ENCODE measurements at regions of chr1 and their contacts with region 1.

Region 1: GRCh38 chr1:11337580-11338073 is 64.6 kb downstream of the UBIAD1 start:
- DNase-seq: peak; percentile 65 to 76
- ATAC-seq: peak in 2 of 4 donors; percentile 47 to 58
- H3K4me3 ChIP-seq: no peak overlapping the region
- H3K27ac ChIP-seq: no peak overlapping the region
- H3K4me1 ChIP-seq: peaks cover 20% of the 10 kb centered on the region
- H3K27me3 ChIP-seq: no peaks in the 10 kb centered on the region
- CTCF ChIP-seq: peak; percentile 79

Region 2: GRCh38 chr1:10950316-10951172 is 387.1 kb before region 1 on chr1:
- intact Hi-C with region 1: no loop called
- DNase-seq: no peak
- ATAC-seq: peak in 1 of 4 donors; percentile 60
- H3K4me3 ChIP-seq: no peak overlapping the region
- H3K27ac ChIP-seq: peak overlapping the region; percentile 30
- H3K4me1 ChIP-seq: peaks cover 8% of the 10 kb centered on the region
- H3K27me3 ChIP-seq: no peaks in the 10 kb centered on the region
- CTCF ChIP-seq: no peak

Region 3: DNA sequence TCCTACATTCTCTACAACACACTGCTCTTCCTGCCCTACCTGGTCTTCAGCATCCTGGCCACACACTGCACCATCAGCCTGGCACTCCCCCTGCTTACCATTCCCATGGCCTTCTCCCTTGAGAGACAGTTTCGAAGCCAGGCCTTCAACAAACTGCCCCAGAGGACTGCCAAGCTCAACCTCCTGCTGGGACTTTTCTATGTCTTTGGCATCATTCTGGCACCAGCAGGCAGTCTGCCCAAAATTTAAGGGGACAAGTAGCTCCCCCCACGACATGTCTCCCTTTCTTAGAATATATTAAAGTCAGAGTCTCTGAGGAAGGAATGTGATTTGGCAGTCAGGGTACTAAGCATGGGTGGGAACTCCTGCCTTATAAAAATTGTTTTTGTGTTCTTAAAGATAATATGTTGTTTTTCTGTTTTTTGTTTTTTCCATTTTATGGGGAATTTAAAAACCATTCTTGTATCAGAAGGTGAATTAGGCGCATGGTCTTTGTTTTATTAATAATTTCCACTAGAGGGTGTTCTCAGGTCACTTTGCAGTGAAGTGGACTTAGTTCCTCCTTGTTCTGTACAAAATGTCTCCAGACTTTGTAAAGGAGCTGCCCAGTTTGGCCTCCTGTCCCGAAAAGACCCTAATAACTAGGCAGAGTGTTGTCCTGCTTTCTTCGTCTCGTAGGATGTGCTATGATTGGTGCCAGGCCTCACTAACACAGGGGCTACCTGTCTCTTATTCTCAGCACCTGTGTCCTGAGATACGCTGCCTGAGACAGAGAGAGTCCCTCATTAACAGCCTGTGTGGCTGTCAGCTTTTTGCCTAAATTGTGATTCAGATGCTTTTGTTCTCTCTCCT is 51.5 kb before region 1 on chr1:
- intact Hi-C with region 1: loop called in 1 of 2 experiments (anchors 5 kb)
- DNase-seq: no peak
- ATAC-seq: peak in 1 of 4 donors; percentile 30
- H3K4me3 ChIP-seq: no peak overlapping the region
- H3K27ac ChIP-seq: no peak overlapping the region
- H3K4me1 ChIP-seq: peaks cover 32% of the 10 kb centered on the region
- H3K27me3 ChIP-seq: no peaks in the 10 kb centered on the region
- CTCF ChIP-seq: peak; percentile 26

Region 4: GRCh38 chr1:11364170-11364569 is 26.5 kb after region 1 on chr1:
- intact Hi-C with region 1: loop called (anchors 2 kb)
- DNase-seq: peak in 1 of 2 donors; percentile 67
- ATAC-seq: peak; percentile 86 to 98 (median 96)
- H3K4me3 ChIP-seq: no peak overlapping the region
- H3K27ac ChIP-seq: no peak overlapping the region
- H3K4me1 ChIP-seq: no peaks in the 10 kb centered on the region
- H3K27me3 ChIP-seq: peaks cover 0 to 6% (median 0%) of the 10 kb centered on the region in 3 donors
- CTCF ChIP-seq: peak; percentile 63

Region 5: DNA sequence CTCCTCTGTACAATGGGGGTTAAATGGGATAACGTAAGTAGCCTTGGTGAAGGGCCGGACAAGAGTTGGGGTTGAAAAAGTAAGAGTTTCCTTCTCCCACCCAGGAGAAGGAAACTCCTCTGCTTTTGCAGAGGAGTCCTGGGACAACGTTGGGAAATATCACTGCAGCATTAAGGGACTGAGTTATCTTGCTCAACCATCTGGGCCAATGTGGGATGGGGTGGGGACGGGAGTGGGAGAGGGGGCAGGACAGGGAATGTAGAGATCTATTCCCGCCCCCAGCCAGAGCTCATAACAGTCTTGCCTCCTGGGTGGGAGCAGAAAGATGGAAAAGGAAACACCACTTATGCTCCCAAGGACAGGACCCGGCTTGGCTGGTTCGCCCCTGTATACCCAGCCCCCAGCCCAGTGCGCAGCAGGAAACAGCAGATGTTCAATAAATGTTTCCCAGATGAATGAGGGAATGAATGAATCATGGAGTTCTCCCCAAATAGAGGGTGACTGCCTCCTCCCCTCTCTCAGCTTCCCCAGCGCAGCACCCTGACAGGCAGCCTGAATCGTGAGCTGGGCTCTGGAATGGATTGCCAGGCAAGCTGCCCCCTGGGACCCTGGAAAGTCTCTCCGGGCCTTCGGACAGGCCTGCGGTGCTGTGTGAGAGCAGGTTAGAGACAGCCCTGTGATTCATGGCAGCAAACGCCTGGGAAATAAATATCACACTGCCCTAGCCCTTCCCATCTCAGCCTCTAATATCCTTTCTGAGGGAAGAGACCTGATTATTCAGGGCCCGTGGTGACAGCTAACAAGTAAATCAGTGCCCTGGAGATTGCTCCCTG is 291.8 kb after region 1 on chr1:
- intact Hi-C with region 1: no loop called
- DNase-seq: no peak
- ATAC-seq: no peak
- H3K4me3 ChIP-seq: no peak overlapping the region
- H3K27ac ChIP-seq: no peak overlapping the region
- H3K4me1 ChIP-seq: no peaks in the 10 kb centered on the region
- H3K27me3 ChIP-seq: peaks cover 0 to 39% (median 24%) of the 10 kb centered on the region in 3 donors
- CTCF ChIP-seq: no peak

Measured in psoas muscle (tissue), 8 donors.